Heart right ventricle (tissue), 16 donors: ENCODE measurements at regions of chr2 and their contacts with region 1.

Region 1: GRCh38 chr2:196076778-196077568 is 8.3 kb upstream of the DNAH7 start:
- DNase-seq: no peak
- ATAC-seq: no peak
- H3K4me3 ChIP-seq: no peak overlapping the region
- H3K27ac ChIP-seq: no peak overlapping the region
- H3K4me1 ChIP-seq: peaks cover 0 to 31% (median 16%) of the 10 kb centered on the region in 9 donors
- H3K27me3 ChIP-seq: no peaks in the 10 kb centered on the region
- CTCF ChIP-seq: no peak

Region 2: DNA sequence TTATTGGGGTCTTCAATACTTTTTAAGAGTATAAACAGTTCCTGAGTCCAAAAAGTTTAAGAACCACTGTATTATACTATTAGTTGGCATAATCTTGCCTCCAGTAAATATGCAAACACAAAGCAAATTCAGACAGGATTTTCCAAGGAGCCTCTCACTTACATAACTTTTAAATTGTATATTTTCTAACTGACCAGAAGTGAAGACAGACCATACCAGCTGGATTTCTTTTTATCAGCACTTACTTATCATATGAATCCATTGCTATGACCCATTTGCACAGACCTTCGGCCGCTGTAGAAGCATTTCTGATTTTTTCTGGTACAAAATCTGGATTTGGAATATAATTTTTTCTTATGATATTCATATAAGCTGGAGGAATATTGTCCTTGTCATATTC is 219.8 kb before region 1 on chr2:
- intact Hi-C with region 1: no loop called
- DNase-seq: no peak
- ATAC-seq: no peak
- H3K4me3 ChIP-seq: no peak overlapping the region
- H3K27ac ChIP-seq: no peak overlapping the region
- H3K4me1 ChIP-seq: no peaks in the 10 kb centered on the region
- H3K27me3 ChIP-seq: no peaks in the 10 kb centered on the region
- CTCF ChIP-seq: no peak

Region 3: DNA sequence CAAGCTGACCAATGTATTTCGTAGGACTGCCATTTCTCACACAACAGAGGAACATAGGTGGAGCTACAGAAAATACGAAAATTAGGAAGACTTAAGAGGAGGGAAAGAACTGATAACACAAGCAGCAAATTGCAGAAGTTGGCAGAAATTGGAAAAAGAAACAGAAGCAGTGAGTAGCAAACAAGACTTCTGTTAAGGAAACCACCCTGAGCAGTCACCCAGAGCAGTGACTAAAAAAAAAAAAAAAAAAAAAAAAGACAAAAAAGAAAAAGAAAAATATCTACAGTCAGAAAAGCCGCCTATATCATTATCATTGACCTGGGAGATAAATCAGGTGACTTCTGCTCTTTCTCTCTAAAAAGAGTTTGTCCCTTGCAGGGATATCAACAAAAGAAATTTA is 73.0 kb after region 1 on chr2:
- intact Hi-C with region 1: loop called in 1 of 10 experiments (anchors 10 kb)
- DNase-seq: no peak
- ATAC-seq: peak in 1 of 8 donors; percentile 25
- H3K4me3 ChIP-seq: no peak overlapping the region
- H3K27ac ChIP-seq: peak overlapping the region in 1 of 10 donors; percentile 28
- H3K4me1 ChIP-seq: peaks cover 0 to 29% (median 0%) of the 10 kb centered on the region in 9 donors
- H3K27me3 ChIP-seq: no peaks in the 10 kb centered on the region
- CTCF ChIP-seq: no peak

Region 4: GRCh38 chr2:196277002-196277401 is 200.0 kb after region 1 on chr2:
- intact Hi-C with region 1: loop called in 6 of 10 experiments (anchors 5 to 10 kb)
- DNase-seq: no peak
- ATAC-seq: no peak
- H3K4me3 ChIP-seq: no peak overlapping the region
- H3K27ac ChIP-seq: peak overlapping the region in 1 of 10 donors; percentile 61
- H3K4me1 ChIP-seq: peaks cover 0 to 35% (median 17%) of the 10 kb centered on the region in 9 donors
- H3K27me3 ChIP-seq: no peaks in the 10 kb centered on the region
- CTCF ChIP-seq: peak in 8 of 9 donors; percentile 17 to 66 (median 52)

Region 5: GRCh38 chr2:196337208-196337953 is 260.4 kb after region 1 on chr2:
- intact Hi-C with region 1: loop called in 2 of 10 experiments (anchors 2 to 5 kb)
- DNase-seq: no peak
- ATAC-seq: no peak
- H3K4me3 ChIP-seq: no peak overlapping the region
- H3K27ac ChIP-seq: peak overlapping the region in 1 of 10 donors; percentile 8
- H3K4me1 ChIP-seq: peaks cover 0 to 84% (median 22%) of the 10 kb centered on the region in 9 donors
- H3K27me3 ChIP-seq: no peaks in the 10 kb centered on the region
- CTCF ChIP-seq: peak; percentile 10 to 64 (median 56)

Region 6: DNA sequence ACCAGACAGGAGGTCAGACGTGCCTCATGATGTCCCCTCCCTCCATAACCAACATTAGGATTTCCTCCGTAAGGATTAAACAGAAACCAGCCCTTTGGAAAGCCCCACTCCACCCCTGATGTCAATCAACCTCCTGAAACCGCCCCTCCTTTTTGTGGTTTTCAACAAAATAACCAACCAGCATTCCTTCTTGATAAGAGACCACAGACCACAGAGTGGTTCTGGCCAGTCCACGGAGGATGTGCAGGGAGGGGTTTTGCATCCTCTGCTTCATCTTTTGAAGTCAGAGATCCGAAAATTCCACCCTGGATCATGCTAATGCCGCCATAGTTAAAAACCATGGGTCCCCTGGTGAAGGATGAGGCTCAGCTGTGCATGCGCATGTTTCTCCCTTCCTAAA is 382.6 kb after region 1 on chr2:
- intact Hi-C with region 1: loop called in 7 of 10 experiments (anchors 5 to 10 kb)
- DNase-seq: no peak
- ATAC-seq: no peak
- H3K4me3 ChIP-seq: no peak overlapping the region
- H3K27ac ChIP-seq: no peak overlapping the region
- H3K4me1 ChIP-seq: no peaks in the 10 kb centered on the region
- H3K27me3 ChIP-seq: peaks cover 0 to 10% (median 0%) of the 10 kb centered on the region in 7 donors
- CTCF ChIP-seq: no peak

Region 7: GRCh38 chr2:196750982-196751635 is 674.1 kb after region 1 on chr2:
- intact Hi-C with region 1: loop called in 2 of 10 experiments (anchors 10 kb)
- DNase-seq: peak; percentile 39 to 46
- ATAC-seq: peak in 6 of 8 donors; percentile 53 to 80 (median 66)
- H3K4me3 ChIP-seq: peak overlapping the region in 1 of 10 donors; percentile 24
- H3K27ac ChIP-seq: no peak overlapping the region
- H3K4me1 ChIP-seq: peaks cover 0 to 7% (median 0%) of the 10 kb centered on the region in 9 donors
- H3K27me3 ChIP-seq: no peaks in the 10 kb centered on the region
- CTCF ChIP-seq: peak; percentile 39 to 84 (median 81)

Region 8: GRCh38 chr2:196767101-196767500 is 690.1 kb after region 1 on chr2:
- intact Hi-C with region 1: loop called in 1 of 10 experiments (anchors 10 kb)
- DNase-seq: no peak
- ATAC-seq: no peak
- H3K4me3 ChIP-seq: no peak overlapping the region
- H3K27ac ChIP-seq: no peak overlapping the region
- H3K4me1 ChIP-seq: no peaks in the 10 kb centered on the region
- H3K27me3 ChIP-seq: no peaks in the 10 kb centered on the region
- CTCF ChIP-seq: no peak